Sciatic nerve (tissue), 2 donors: ENCODE measurements at regions of chr5 and their contacts with region 1.

Region 1: GRCh38 chr5:59188419-59189225 is 605.7 kb downstream of the RAB3C start:
- DNase-seq: peak; percentile 75
- ATAC-seq: peak; percentile 92

Region 2: GRCh38 chr5:59371525-59372127 is 183.0 kb after region 1 on chr5:
- intact Hi-C with region 1: loop called (anchors 10 kb)
- DNase-seq: no peak
- ATAC-seq: no peak

Region 3: DNA sequence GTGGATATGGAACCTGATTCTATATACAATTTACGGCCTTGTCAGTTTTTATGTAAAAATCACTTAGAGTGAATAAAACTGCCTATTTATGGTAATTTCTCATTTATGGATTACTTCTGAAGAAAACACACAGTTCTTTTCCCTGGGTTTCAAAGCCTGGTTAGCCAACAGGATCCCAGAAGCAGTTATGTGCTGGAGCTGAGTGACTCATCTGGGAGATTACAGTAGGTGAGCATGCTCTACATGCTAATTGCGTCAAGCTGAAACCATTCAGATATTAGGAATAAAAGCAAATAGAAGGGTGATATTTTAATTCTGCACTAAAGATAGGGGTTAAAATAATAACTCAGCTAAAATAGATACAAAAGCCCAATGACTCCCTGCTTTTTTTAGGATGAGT is 657.1 kb after region 1 on chr5:
- intact Hi-C with region 1: no loop called
- DNase-seq: no peak
- ATAC-seq: no peak